CD8-positive, alpha-beta T cell (primary cell): ENCODE measurements at regions of chr2 and their contacts with region 1.

Region 1: DNA sequence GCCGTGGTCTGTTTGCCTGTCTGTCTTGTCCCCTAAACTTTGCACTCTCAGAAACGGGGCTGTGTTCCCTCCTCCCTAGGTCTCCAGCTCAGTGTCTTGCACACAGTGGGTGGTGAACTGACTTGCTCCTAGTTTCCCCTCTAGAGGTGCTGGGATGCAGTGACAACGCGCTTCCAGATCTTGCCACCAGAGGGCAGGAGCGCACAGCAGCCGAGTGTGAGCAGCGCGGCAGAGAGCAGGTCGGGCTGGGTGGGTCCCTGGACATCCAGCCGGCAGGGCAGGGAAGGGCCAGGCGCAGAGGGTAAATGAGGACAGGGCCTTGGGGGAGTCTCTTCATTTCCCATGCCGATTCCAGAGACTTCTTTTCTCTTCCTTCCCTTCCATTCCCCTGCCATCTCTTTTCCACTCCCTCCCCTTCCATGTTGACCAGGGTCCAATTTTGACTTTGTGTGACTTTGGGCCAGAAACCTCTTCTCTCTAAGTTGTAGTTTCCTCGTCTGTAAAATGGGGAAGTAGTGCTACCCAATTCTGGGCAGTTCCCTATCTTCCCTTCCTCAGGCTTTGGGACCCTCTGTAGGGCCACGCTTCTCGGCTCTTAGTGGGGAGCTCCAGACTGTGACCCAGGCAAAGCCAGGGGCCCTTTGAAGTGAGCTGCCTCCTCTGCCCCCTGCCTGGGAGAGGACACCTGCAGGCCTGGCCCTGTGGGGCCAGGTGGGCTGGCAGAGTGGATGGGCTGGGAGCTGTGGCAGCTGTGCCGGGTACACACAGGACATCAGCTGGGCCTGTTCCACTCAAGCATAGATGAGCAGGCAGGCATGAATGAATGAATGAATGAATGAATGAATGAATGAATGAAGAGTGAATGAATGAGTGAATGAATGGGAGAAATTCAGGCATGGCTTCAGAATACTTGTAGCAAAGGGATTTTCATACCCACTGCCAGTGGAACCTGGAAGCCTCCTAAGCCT is 43.3 kb upstream of the TAF1B start:
- DNase-seq: peak; percentile 70 to 88 (median 85)
- ATAC-seq: peak; percentile 83
- H3K4me3 ChIP-seq: peak overlapping the region in 1 of 2 experiments; percentile 37
- H3K4me3 Mint-ChIP-seq: peak overlapping the region; percentile 76
- H3K27ac ChIP-seq: peak overlapping the region in 1 of 2 experiments; percentile 48
- H3K27ac Mint-ChIP-seq: peak overlapping the region; percentile 4
- H3K4me1 ChIP-seq: peaks cover 14% of the 10 kb centered on the region
- H3K4me1 Mint-ChIP-seq: peaks cover 20% of the 10 kb centered on the region
- H3K27me3 ChIP-seq: no peaks in the 10 kb centered on the region
- H3K27me3 Mint-ChIP-seq: peaks cover 3% of the 10 kb centered on the region
- CTCF ChIP-seq: peak; percentile 97

Region 2: DNA sequence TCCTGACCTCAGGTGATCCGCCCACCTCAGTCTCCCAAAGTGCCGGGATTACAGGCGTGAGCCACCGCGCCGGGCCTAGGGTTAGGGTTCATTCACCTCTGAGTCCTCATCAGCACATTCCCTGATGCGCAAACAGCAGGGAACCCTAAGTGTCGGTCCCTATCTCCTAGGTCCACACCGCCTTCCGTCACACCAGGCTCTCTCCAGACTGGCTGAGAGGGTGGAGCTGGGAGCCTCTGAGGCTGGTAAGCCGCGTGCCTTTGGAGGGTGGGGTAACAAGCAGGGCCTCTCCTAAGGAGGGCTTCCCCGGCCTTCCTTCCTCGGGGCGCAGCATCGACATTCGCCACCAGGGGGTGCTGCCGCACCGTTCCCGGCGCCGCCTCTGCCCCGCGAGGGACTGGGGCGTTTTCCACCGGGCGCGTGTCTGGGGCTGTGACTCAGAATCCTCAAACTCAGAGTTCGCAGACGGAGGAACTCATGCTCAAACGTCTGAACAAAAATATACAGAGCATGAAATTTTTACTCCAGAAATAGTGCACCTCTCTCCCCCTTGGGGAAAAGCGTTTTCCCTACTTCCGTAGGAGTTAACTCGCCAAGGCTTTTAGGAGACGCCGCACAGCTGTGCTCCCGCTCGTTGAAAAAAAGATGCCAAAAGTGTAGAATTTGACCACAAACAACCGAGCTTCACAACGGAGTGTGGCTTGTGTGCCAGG is 657.2 kb before region 1 on chr2:
- CTCF ChIA-PET with region 1: no interaction called
- POLR2A ChIA-PET with region 1: no interaction called
- intact Hi-C with region 1: loop called in 1 of 2 experiments (anchors 5 kb)
- DNase-seq: peak; percentile 57 to 88 (median 75)
- ATAC-seq: peak; percentile 95
- H3K4me3 ChIP-seq: peak overlapping the region in 1 of 2 experiments; percentile 8
- H3K4me3 Mint-ChIP-seq: peak overlapping the region; percentile 39
- H3K27ac ChIP-seq: no peak overlapping the region
- H3K27ac Mint-ChIP-seq: no peak overlapping the region
- H3K4me1 ChIP-seq: peaks cover 3% of the 10 kb centered on the region
- H3K4me1 Mint-ChIP-seq: peaks cover 6% of the 10 kb centered on the region
- H3K27me3 ChIP-seq: no peaks in the 10 kb centered on the region
- H3K27me3 Mint-ChIP-seq: peaks cover 21% of the 10 kb centered on the region
- CTCF ChIP-seq: peak; percentile 90

Region 3: DNA sequence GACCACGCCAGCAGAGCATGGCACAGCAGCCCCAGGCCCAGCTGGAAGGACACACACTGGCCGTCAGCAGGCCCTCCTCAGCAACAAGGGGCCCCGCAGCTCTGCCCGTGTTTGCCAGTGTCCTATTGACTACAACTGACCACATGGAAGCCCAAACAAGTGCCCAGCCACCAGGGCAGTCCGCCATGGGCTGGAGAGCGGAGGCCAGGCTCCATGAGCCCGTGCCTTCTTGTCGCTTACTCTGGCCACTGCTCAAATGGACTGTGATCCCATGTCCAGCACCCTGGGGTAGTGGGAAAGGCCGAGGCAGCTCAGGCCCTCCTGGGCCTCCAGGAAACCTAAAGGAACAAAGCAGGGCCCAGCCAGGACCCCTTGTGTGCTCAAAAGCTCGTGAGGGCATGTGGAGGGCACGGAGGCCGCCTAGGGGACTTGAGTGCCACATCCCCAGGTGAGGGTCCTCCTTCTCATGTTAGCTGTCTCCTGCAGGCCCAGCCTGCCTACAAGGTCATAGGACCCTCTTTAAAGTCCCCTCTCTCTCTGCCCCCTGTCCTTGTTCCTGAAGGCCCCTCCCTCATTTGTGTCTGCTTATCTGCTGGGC is 10.5 kb before region 1 on chr2:
- CTCF ChIA-PET with region 1: interaction called, 12 read pairs
- POLR2A ChIA-PET with region 1: no interaction called
- intact Hi-C with region 1: no loop called
- DNase-seq: no peak
- ATAC-seq: no peak
- H3K4me3 ChIP-seq: no peak overlapping the region
- H3K4me3 Mint-ChIP-seq: no peak overlapping the region
- H3K27ac ChIP-seq: no peak overlapping the region
- H3K27ac Mint-ChIP-seq: no peak overlapping the region
- H3K4me1 ChIP-seq: no peaks in the 10 kb centered on the region
- H3K4me1 Mint-ChIP-seq: peaks cover 5% of the 10 kb centered on the region
- H3K27me3 ChIP-seq: no peaks in the 10 kb centered on the region
- H3K27me3 Mint-ChIP-seq: peaks cover 2% of the 10 kb centered on the region
- CTCF ChIP-seq: no peak

Region 4: GRCh38 chr2:10124538-10125045 is 324.6 kb after region 1 on chr2:
- CTCF ChIA-PET with region 1: no interaction called
- POLR2A ChIA-PET with region 1: no interaction called
- intact Hi-C with region 1: no loop called
- DNase-seq: peak in 5 of 9 experiments; percentile 32 to 87 (median 51)
- ATAC-seq: no peak
- H3K4me3 ChIP-seq: no peak overlapping the region
- H3K4me3 Mint-ChIP-seq: no peak overlapping the region
- H3K27ac ChIP-seq: no peak overlapping the region
- H3K27ac Mint-ChIP-seq: no peak overlapping the region
- H3K4me1 ChIP-seq: peaks cover 33% of the 10 kb centered on the region
- H3K4me1 Mint-ChIP-seq: peaks cover 39% of the 10 kb centered on the region
- H3K27me3 ChIP-seq: peaks cover 13 to 17% of the 10 kb centered on the region in 2 experiments
- H3K27me3 Mint-ChIP-seq: peaks cover 19% of the 10 kb centered on the region
- CTCF ChIP-seq: peak; percentile 85

Region 5: GRCh38 chr2:10432315-10433181 is 632.6 kb after region 1 on chr2:
- CTCF ChIA-PET with region 1: no interaction called
- POLR2A ChIA-PET with region 1: no interaction called
- intact Hi-C with region 1: no loop called
- DNase-seq: peak in 1 of 9 experiments; percentile 37
- ATAC-seq: peak; percentile 13
- H3K4me3 ChIP-seq: peak overlapping the region in 1 of 2 experiments; percentile 35
- H3K4me3 Mint-ChIP-seq: peak overlapping the region; percentile 58
- H3K27ac ChIP-seq: no peak overlapping the region
- H3K27ac Mint-ChIP-seq: no peak overlapping the region
- H3K4me1 ChIP-seq: peaks cover 14% of the 10 kb centered on the region
- H3K4me1 Mint-ChIP-seq: peaks cover 16% of the 10 kb centered on the region
- H3K27me3 ChIP-seq: peaks cover 0 to 4% of the 10 kb centered on the region in 2 experiments
- H3K27me3 Mint-ChIP-seq: peaks cover 2% of the 10 kb centered on the region
- CTCF ChIP-seq: no peak